ENCODE measurements at regions of chr22 and their contacts with region 1.

Region 1: DNA sequence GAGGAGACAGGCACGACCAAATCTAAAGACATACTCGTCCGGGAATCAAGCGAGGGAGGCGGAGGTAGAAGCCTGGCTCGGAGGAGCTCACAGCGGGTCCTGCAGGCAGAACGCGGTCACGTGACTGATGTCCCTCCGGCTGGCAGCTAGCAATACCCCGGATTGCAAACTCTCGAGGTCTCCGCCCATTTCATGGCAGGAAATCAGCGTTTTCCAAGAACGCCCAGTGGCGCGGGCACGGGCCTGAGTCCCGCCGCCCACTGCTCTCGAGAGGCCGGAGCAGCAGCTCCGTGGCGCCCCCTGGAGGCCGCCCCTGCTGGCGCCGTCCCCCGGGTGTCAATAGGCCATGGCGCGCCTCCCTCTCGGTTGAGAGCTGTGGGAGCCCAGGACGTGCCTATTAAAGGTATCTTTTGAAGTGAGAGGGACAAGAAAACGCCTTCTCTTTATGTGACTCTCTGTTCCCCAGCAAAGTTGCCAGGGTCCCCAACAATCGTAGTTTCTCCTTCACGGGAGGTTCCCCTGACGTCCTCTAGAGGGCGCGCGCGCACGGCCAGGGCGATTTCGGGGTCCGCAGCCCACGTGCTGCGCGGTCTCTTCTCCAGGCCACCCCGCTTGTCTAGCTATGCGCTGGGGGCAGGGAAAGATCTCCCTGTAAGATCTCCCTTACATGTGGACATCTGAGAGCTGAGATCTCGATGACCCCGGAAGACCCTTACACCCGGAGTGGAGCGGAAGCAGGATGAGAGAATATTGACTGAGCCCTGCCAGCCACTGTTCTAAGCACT is 37.3 kb upstream of the RBFOX2 start:
- DNase-seq: peak; percentile 71
- ATAC-seq: peak; percentile 85
- H3K4me3 Mint-ChIP-seq: peak overlapping the region; percentile 77
- H3K27ac Mint-ChIP-seq: peak overlapping the region; percentile 75
- H3K4me1 Mint-ChIP-seq: peaks cover 11% of the 10 kb centered on the region
- H3K27me3 Mint-ChIP-seq: peaks cover 18% of the 10 kb centered on the region

Region 2: GRCh38 chr22:35627264-35628041 is 438.5 kb before region 1 on chr22:
- CTCF ChIA-PET with region 1: interaction called, 14 read pairs
- POLR2A ChIA-PET with region 1: no interaction called
- DNase-seq: peak; percentile 66
- ATAC-seq: peak; percentile 48
- H3K4me3 Mint-ChIP-seq: peak overlapping the region; percentile 74
- H3K27ac Mint-ChIP-seq: peak overlapping the region; percentile 53
- H3K4me1 Mint-ChIP-seq: peaks cover 25% of the 10 kb centered on the region
- H3K27me3 Mint-ChIP-seq: peaks cover 8% of the 10 kb centered on the region

Region 3: GRCh38 chr22:35971456-35972119 is 94.4 kb before region 1 on chr22:
- CTCF ChIA-PET with region 1: interaction called, 15 read pairs
- POLR2A ChIA-PET with region 1: no interaction called
- DNase-seq: no peak
- ATAC-seq: no peak
- H3K4me3 Mint-ChIP-seq: no peak overlapping the region
- H3K27ac Mint-ChIP-seq: no peak overlapping the region
- H3K4me1 Mint-ChIP-seq: no peaks in the 10 kb centered on the region
- H3K27me3 Mint-ChIP-seq: peaks cover 15% of the 10 kb centered on the region

Region 4: DNA sequence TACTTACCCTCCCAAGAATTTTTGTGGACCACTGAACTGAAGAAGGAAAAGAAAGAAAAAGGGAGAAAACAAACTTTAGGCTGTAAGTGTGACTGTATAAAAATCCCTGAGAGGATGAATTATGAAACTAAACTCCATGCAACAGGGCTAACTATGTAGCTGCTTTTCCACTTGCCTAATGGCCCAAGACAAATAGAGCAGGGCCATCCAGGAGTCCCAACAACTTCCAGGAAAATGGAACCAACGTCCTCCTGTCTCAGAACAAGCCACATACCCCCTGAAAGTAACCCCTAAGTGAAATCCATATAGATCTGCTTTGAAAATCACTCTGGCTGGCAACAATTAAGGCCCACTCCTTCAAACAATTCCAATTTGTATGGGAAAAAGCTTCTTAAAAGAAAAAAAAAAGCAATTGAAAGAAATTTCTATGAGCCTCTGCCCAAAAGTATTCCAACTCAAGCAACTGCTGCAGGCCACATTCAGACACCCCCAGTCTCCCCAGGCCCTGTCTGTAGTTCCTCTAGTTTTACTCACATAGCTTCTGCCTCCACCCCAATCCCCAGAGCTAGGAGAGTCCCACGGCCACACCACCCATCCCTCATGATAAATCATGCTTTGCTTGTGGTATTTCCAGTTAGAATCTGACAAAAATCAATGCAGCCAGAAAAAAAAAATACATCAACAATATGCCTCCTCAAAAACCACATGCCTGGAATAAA is 50.0 kb before region 1 on chr22:
- CTCF ChIA-PET with region 1: interaction called, 17 read pairs
- POLR2A ChIA-PET with region 1: no interaction called
- DNase-seq: no peak
- ATAC-seq: no peak
- H3K4me3 Mint-ChIP-seq: no peak overlapping the region
- H3K27ac Mint-ChIP-seq: no peak overlapping the region
- H3K4me1 Mint-ChIP-seq: no peaks in the 10 kb centered on the region
- H3K27me3 Mint-ChIP-seq: peaks cover 9% of the 10 kb centered on the region

Region 5: DNA sequence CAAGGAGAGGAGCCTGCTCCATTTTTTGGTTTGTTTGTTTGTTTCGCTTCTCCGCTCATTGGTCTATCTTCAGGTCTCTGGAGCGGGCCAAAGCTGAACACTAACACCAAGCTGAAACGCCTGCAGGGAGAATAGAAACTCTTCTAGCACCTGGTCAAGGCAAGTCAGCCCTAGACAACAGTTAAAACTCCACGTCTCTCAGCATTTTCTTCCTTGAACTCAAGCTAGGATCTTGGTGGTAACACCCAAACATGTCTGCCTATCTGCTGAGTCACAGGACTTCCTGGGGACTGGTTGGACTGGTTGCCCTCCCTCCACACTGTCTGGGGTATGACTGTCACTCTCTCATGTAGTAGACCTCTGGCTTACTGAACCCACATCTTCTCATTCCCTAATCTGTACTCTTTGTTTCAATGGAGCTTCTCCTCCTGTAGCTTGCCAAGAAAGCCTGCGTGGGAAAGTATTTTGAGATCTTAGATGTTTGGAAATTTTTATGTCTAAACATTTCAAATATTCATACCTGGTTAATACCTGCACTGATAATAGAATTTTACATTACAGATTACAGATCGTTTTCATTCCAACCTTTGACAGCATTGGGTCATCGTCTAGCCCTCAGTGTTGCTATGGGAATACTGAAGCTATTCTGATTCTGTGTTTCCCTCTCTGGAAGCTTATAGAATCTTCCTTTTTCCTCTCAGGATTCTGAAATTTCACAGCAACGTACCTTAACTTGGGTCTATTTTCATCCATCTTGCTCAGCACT is 13.3 kb before region 1 on chr22:
- CTCF ChIA-PET with region 1: interaction called, 55 read pairs
- POLR2A ChIA-PET with region 1: interaction called, 4 read pairs
- DNase-seq: peak; percentile 24
- ATAC-seq: peak; percentile 47
- H3K4me3 Mint-ChIP-seq: no peak overlapping the region
- H3K27ac Mint-ChIP-seq: no peak overlapping the region
- H3K4me1 Mint-ChIP-seq: peaks cover 10% of the 10 kb centered on the region
- H3K27me3 Mint-ChIP-seq: peaks cover 5% of the 10 kb centered on the region

Region 6: GRCh38 chr22:36104988-36105387 is 39.0 kb after region 1 on chr22:
- CTCF ChIA-PET with region 1: interaction called, 18 read pairs
- POLR2A ChIA-PET with region 1: no interaction called
- DNase-seq: no peak
- ATAC-seq: no peak
- H3K4me3 Mint-ChIP-seq: no peak overlapping the region
- H3K27ac Mint-ChIP-seq: no peak overlapping the region
- H3K4me1 Mint-ChIP-seq: no peaks in the 10 kb centered on the region
- H3K27me3 Mint-ChIP-seq: peaks cover 9% of the 10 kb centered on the region

Region 7: GRCh38 chr22:36156515-36157419 is 90.8 kb after region 1 on chr22:
- CTCF ChIA-PET with region 1: interaction called, 11 read pairs
- POLR2A ChIA-PET with region 1: no interaction called
- DNase-seq: peak; percentile 66
- ATAC-seq: peak; percentile 49
- H3K4me3 Mint-ChIP-seq: peak overlapping the region; percentile 97
- H3K27ac Mint-ChIP-seq: peak overlapping the region; percentile 97
- H3K4me1 Mint-ChIP-seq: peaks cover 93% of the 10 kb centered on the region
- H3K27me3 Mint-ChIP-seq: no peaks in the 10 kb centered on the region